ENCODE measurements at regions of chr15 and their contacts with region 1.

Region 1: DNA sequence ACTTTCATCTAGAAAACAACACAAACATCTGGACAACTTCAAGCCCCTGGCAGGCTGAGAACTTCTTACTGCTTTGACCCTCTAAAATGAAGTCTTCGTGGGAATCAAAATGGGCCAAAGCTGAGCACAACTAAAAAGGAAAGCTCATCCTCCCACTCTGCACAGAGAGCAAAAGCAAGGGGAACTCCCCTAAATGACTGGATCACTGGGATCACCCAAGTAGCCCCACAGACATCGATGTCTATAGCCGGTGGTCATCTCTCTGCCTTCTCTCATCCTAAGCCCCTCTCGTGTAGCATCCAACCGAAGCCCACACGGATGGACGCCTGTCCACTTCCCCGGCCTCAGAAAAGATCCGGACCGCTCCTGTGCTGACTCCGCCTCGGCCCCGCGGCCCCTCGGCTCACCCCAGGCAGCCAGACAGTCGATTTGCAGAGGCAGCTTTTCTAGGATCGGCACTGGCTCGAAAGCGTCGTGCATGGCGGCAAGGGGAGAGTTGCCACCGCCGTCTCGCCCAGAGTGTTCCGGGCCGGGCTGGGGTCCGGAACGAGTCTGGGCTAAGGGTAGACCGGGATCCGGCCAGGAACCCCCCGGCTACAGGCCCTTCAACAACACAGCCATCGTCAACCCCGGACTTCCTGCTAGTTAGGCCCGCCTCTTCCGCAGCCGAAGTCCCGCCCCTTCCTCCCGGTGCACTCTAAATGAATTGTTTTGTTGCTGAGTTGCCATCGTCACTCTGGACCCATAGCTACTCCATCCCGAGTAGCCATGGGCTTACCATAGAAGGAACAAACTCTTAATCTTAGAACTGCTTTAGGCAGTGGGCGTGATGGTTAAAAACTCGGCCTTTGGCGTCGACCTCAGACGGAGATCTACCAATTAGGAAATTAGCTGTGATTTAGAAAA is at the start of gene VPS39:
- DNase-seq: peak; percentile 80 to 84 (median 81)
- H3K4me3 ChIP-seq: peak within 1 kb of the TSS; percentile 83 to 92 (median 83)
- H3K4me3 Mint-ChIP-seq: peak within 1 kb of the TSS; percentile 98 to 99
- H3K27ac ChIP-seq: peak within 1 kb of the TSS; percentile 60 to 95
- H3K27ac Mint-ChIP-seq: peak within 1 kb of the TSS; percentile 91 to 98 (median 96)
- H3K4me1 ChIP-seq: peaks cover 14 to 19% of the 10 kb centered on the region in 2 donors
- H3K4me1 Mint-ChIP-seq: peaks cover 26% of the 10 kb centered on the region
- H3K27me3 ChIP-seq: no peaks in the 10 kb centered on the region
- H3K27me3 Mint-ChIP-seq: no peaks in the 10 kb centered on the region
- CTCF ChIP-seq: no peak
- polyA plus RNA-seq, gene VPS39: 16.8 to 102 (median 25.8) TPM

Region 2: GRCh38 chr15:42182961-42183360 is 25.0 kb before region 1 on chr15:
- intact Hi-C with region 1: loop called in 1 of 2 experiments (anchors 2 kb)
- DNase-seq: peak; percentile 36 to 79 (median 75)
- H3K4me3 ChIP-seq: peak overlapping the region in 1 of 3 experiments; percentile 22
- H3K4me3 Mint-ChIP-seq: peak overlapping the region in 1 of 2 donors; percentile 56
- H3K27ac ChIP-seq: peak overlapping the region; percentile 13 to 77
- H3K27ac Mint-ChIP-seq: peak overlapping the region; percentile 48 to 95 (median 91)
- H3K4me1 ChIP-seq: peaks cover 25 to 31% of the 10 kb centered on the region in 2 donors
- H3K4me1 Mint-ChIP-seq: peaks cover 25% of the 10 kb centered on the region
- H3K27me3 ChIP-seq: no peaks in the 10 kb centered on the region
- H3K27me3 Mint-ChIP-seq: no peaks in the 10 kb centered on the region
- CTCF ChIP-seq: no peak